H1 (cell line): ENCODE measurements at regions of chr4 and their contacts with region 1.

Region 1: DNA sequence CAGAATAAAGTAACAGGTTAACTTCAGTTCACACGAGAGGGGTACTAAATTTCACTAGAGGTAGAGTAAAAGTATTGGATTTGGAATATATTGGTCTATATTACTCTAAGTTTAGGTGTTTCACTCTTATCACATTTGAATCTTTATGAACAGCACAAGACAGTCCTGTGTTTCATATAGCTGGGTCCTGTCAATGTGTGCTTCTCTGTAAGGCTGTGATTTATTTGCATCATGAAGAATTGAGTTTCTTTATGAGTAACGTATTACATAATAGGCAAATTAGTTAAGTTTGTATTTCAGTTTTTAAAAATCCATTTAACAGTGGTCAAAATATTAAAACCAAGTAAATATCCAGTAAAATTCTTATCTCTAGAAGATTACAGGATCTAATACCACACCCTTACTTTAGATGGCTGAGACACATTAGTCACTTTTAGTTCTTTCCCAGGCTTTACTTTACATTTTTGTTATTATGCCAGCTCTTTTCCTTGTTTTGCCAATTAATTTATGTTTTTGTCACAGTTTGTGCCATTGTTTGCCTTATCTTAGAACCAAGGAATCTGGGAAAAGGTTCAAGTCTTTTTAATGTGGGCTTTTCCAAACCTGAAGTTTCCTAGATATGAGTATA is 32.1 kb downstream of the NUDT6 start:
- DNase-seq: no peak
- H3K4me3 ChIP-seq: no peak overlapping the region
- H3K27ac ChIP-seq: no peak overlapping the region
- H3K4me1 ChIP-seq: no peaks in the 10 kb centered on the region
- H3K27me3 ChIP-seq: peaks cover 0 to 2% (median 0%) of the 10 kb centered on the region in 4 experiments; a peak in 1 of 7 replicates
- CTCF ChIP-seq: no peak
- EP300 ChIP-seq: no peak
- POLR2A ChIP-seq: no peak
- RAD21 ChIP-seq: no peak

Region 2: DNA sequence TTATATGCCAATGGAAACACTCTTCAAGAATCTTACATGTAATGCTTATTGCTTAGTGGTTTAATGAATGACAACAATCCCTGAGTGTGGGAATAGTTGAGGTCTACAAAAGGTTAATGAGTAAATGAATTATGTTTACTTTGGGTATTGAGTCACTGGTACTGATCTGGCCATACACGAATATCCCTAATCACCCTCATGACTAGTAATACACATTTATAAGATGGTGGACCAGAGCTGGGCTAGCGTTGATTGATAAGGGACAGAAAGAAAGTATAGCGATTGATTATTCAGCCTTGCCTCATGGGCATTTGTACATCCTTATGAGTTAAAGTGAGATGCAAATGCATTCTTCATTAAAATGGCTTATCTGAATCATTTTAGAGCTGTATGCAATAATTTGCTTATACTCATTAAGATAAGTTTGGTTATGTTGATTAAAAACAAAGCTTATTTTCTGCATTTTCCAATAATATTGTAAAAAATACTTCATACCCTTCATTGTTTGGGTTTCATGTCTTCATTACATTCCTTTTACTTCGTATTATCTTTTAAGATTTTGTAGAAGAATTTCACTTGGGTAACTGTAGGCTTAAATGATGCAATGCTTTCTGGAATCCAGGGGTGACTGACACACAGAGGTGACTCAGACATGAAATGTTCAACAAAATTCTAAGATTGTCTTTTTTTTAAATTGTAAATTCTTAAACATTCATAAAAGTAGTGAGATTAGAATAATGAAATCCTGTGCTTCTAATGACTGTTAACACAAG is 16.2 kb before region 1 on chr4:
- CTCF ChIA-PET with region 1: interaction called, 4 read pairs
- POLR2A ChIA-PET with region 1: interaction called, 10 read pairs
- DNase-seq: no peak
- H3K4me3 ChIP-seq: no peak overlapping the region
- H3K27ac ChIP-seq: no peak overlapping the region
- H3K4me1 ChIP-seq: peaks cover 0 to 3% (median 0%) of the 10 kb centered on the region in 4 experiments; a peak in 2 of 7 replicates
- H3K27me3 ChIP-seq: no peaks in the 10 kb centered on the region
- CTCF ChIP-seq: no peak
- EP300 ChIP-seq: no peak
- POLR2A ChIP-seq: no peak
- RAD21 ChIP-seq: no peak

Region 3: DNA sequence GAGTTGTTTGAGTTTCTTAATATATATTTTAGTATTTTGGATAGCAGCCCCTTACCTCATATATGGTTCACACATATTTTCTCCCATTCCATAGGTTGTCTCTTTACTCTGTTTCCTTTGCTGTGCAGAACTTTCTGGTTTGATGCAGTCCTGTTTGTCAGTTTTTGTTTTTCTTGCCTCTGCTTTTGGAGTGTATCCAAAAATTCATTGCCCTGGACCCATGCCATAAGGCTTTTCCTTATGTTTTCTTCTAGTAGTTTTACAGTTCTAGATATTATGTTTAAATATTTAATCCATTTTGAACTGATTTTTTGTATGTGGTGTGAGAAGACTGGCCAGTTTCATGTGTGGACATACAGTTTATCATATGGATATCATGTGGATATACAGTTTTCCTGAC is 90.6 kb after region 1 on chr4:
- CTCF ChIA-PET with region 1: no interaction called
- POLR2A ChIA-PET with region 1: no interaction called
- DNase-seq: no peak
- H3K4me3 ChIP-seq: no peak overlapping the region
- H3K27ac ChIP-seq: no peak overlapping the region
- H3K4me1 ChIP-seq: no peaks in the 10 kb centered on the region
- H3K27me3 ChIP-seq: no peaks in the 10 kb centered on the region
- CTCF ChIP-seq: no peak
- EP300 ChIP-seq: no peak
- POLR2A ChIP-seq: no peak
- RAD21 ChIP-seq: no peak